ENCODE measurements at regions of chr6 and their contacts with region 1.

Region 1: GRCh38 chr6:64012351-64013001 is 376.9 kb downstream of the PHF3 start:
- ATAC-seq: peak; percentile 90 to 98 (median 94)
- H3K4me3 ChIP-seq: no peak overlapping the region
- H3K27ac ChIP-seq: no peak overlapping the region
- H3K4me1 ChIP-seq: peaks cover 9 to 19% of the 10 kb centered on the region in 2 donors

Region 2: GRCh38 chr6:64330694-64331307 is 318.3 kb after region 1 on chr6:
- in situ Hi-C with region 1: loop called in 3 of 9 experiments (anchors 10 to 25 kb)
- ATAC-seq: peak in 4 of 8 experiments; percentile 25 to 69 (median 52)
- H3K4me3 ChIP-seq: no peak overlapping the region
- H3K27ac ChIP-seq: no peak overlapping the region
- H3K4me1 ChIP-seq: no peaks in the 10 kb centered on the region

Measured in motor neuron (in vitro differentiated cells).